CD4-positive, alpha-beta memory T cell (primary cell): ENCODE measurements at regions of chr4 and their contacts with region 1.

Region 1: GRCh38 chr4:82268050-82268825 is 105.6 kb downstream of the HNRNPD start:
- DNase-seq: peak; percentile 41 to 52 (median 47)
- H3K4me3 ChIP-seq: no peak overlapping the region
- H3K4me3 Mint-ChIP-seq: peak overlapping the region in 2 of 8 donors; percentile 5 to 61
- H3K27ac ChIP-seq: no peak overlapping the region
- H3K27ac Mint-ChIP-seq: peak overlapping the region in 2 of 7 donors; percentile 10 to 74
- H3K4me1 ChIP-seq: peaks cover 10% of the 10 kb centered on the region
- H3K4me1 Mint-ChIP-seq: peaks cover 8 to 31% (median 10%) of the 10 kb centered on the region in 4 donors
- H3K27me3 ChIP-seq: no peaks in the 10 kb centered on the region
- H3K27me3 Mint-ChIP-seq: peaks cover 2 to 9% of the 10 kb centered on the region in 2 donors

Region 2: GRCh38 chr4:81844717-81845116 is 423.5 kb before region 1 on chr4:
- CTCF ChIA-PET with region 1: interaction called, 5 read pairs
- POLR2A ChIA-PET with region 1: no interaction called
- intact Hi-C with region 1: loop called (anchors 1 kb)
- DNase-seq: peak; percentile 64 to 73 (median 71)
- H3K4me3 ChIP-seq: no peak overlapping the region
- H3K4me3 Mint-ChIP-seq: no peak overlapping the region
- H3K27ac ChIP-seq: no peak overlapping the region
- H3K27ac Mint-ChIP-seq: no peak overlapping the region
- H3K4me1 ChIP-seq: no peaks in the 10 kb centered on the region
- H3K4me1 Mint-ChIP-seq: no peaks in the 10 kb centered on the region
- H3K27me3 ChIP-seq: no peaks in the 10 kb centered on the region
- H3K27me3 Mint-ChIP-seq: no peaks in the 10 kb centered on the region

Region 3: GRCh38 chr4:82123934-82124333 is 144.3 kb before region 1 on chr4:
- CTCF ChIA-PET with region 1: interaction called, 42 read pairs
- POLR2A ChIA-PET with region 1: no interaction called
- intact Hi-C with region 1: loop called (anchors 1 kb)
- DNase-seq: peak in 4 of 5 donors; percentile 14 to 37 (median 32)
- H3K4me3 ChIP-seq: no peak overlapping the region
- H3K4me3 Mint-ChIP-seq: no peak overlapping the region
- H3K27ac ChIP-seq: no peak overlapping the region
- H3K27ac Mint-ChIP-seq: peak overlapping the region in 1 of 7 donors; percentile 32
- H3K4me1 ChIP-seq: no peaks in the 10 kb centered on the region
- H3K4me1 Mint-ChIP-seq: peaks cover 4 to 13% (median 6%) of the 10 kb centered on the region in 4 donors
- H3K27me3 ChIP-seq: no peaks in the 10 kb centered on the region
- H3K27me3 Mint-ChIP-seq: peaks cover 0 to 2% of the 10 kb centered on the region in 2 donors

Region 4: DNA sequence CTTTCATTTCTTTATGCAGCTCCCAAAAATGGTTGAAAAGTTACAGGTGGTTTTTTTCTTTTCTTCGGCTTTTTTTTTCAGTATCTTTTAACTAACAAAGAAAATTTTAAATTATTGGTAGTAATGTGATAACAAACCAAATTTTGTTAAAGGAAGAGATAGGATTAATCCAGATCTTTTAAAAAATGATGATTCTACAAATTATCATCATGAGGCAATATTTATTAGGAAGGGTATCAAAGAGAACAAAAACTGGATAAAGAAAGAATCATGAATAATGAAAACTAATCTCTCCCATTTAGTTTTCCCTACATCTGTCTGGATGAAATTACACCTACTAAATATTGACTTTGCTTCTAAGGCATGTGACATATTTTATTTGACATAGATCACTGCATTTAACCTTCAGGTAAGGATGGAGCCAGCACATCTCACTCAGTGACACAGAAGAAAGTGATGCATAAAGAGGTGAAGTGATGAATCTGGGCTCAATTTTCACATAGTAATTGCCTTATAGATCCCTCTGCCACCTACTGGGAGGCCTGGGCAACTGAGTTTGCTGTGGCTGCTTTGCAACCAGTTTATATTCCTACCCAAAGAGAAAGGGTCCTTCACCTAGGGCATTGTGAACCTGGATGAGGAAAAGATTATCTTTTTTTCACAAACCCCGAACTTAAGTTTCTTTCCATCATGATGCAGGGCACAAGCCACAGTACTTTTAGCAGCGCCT is 50.1 kb before region 1 on chr4:
- CTCF ChIA-PET with region 1: interaction called, 16 read pairs
- POLR2A ChIA-PET with region 1: no interaction called
- intact Hi-C with region 1: loop called (anchors 1 kb)
- DNase-seq: peak in 4 of 5 donors; percentile 10 to 22 (median 17)
- H3K4me3 ChIP-seq: no peak overlapping the region
- H3K4me3 Mint-ChIP-seq: no peak overlapping the region
- H3K27ac ChIP-seq: no peak overlapping the region
- H3K27ac Mint-ChIP-seq: peak overlapping the region in 1 of 7 donors; percentile 32
- H3K4me1 ChIP-seq: peaks cover 15% of the 10 kb centered on the region
- H3K4me1 Mint-ChIP-seq: peaks cover 13 to 24% (median 15%) of the 10 kb centered on the region in 4 donors
- H3K27me3 ChIP-seq: no peaks in the 10 kb centered on the region
- H3K27me3 Mint-ChIP-seq: no peaks in the 10 kb centered on the region

Region 5: DNA sequence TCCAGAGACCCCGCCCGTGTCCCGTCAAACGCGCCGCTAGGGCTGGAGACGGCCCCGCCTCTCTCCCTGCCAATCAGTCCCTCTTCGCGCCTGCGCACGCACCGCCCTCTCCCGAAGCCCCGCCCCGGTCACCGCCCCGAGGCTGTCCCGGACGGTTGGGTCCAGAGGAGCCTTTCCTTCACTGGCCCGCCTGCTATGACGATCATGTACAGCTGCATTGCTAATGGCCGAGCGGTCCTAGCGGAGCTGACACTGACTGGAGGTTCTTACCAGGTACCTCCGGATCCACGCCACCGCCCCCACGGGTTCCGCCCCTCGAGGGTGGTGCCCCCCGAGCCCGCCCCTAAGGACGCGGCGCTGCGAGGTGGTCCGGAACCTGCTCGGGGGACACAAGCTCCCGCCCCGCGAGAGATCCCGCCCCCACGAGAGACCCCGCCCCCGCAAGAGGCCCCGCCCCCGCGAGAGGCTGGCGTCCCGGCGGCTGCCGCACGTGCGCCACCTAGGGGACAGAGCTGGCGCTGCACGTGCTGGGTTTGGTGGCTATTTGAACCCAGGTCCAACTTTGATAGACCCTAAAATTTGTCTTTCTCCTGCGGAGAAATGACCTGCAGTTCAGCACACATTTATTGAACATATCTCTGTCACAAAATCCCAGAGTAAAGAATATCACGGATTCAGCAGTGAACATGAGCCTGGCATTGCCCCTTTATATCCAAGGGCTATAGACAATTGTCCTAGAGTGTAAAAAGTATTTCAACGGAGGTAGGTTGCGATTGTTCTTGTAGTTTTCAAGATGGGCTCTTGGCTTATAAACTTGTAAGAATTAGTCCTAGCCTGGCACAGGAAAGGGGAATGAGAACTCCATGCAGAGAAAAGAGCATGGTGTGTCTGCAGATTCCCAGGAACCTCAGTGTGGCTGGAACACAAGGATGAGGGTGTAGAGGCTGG is 16.9 kb after region 1 on chr4:
- CTCF ChIA-PET with region 1: interaction called, 30 read pairs
- POLR2A ChIA-PET with region 1: no interaction called
- intact Hi-C with region 1: no loop called
- DNase-seq: peak; percentile 99
- H3K4me3 ChIP-seq: peak overlapping the region; percentile 25 to 70
- H3K4me3 Mint-ChIP-seq: peak overlapping the region; percentile 81 to 94 (median 86)
- H3K27ac ChIP-seq: peak overlapping the region; percentile 49
- H3K27ac Mint-ChIP-seq: peak overlapping the region; percentile 62 to 91 (median 88)
- H3K4me1 ChIP-seq: peaks cover 12% of the 10 kb centered on the region
- H3K4me1 Mint-ChIP-seq: peaks cover 8 to 19% (median 14%) of the 10 kb centered on the region in 4 donors
- H3K27me3 ChIP-seq: no peaks in the 10 kb centered on the region
- H3K27me3 Mint-ChIP-seq: no peaks in the 10 kb centered on the region